MCF 10A (cell line): ENCODE measurements at regions of chr9 and their contacts with region 1.

Region 1: DNA sequence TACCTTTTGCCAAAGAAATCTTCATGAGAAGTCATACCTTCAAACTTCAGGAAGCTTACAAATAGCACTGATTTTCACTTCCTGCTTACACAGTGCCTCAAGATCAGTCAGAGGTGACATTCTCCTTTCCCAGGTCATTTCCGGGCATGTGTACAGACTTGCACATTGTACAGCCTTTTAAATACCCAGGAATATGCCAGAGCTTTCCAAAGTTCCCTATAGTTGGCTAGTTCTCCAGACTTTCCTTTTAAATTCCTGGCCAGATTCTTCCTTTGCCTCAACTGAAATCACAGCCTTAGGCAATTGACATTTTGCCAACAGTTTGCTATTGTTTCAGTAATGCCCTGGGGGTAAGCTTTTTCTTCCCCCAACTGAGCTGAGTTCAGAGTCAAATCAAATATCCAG is 47.2 kb downstream of the RFX3 start:
- DNase-seq: peak; percentile 84
- H3K4me3 Mint-ChIP-seq: peak overlapping the region; percentile 44
- H3K27ac Mint-ChIP-seq: peak overlapping the region; percentile 91
- H3K4me1 Mint-ChIP-seq: peaks cover 30% of the 10 kb centered on the region
- H3K27me3 Mint-ChIP-seq: no peaks in the 10 kb centered on the region
- CTCF ChIP-seq: no peak

Region 2: DNA sequence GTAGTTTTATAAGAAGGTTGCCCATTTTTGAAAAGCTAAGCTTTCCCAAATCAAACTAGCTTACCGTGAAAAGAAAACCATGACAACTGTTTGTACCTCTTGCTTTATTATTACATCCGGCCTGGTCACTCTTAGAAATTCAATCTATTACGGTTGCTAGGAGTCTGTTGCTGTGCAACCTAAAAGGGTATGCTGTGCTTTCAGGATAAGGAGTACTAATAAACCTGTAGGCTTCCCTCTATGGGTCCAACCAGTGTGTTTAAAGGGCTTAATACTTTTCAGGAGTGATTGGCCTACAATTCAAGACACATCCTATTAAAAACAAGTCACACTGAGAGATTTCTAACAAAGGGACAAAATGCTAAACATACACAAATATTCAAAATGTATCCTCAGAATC is 20.1 kb after region 1 on chr9:
- CTCF ChIA-PET with region 1: interaction called, 12 read pairs
- POLR2A ChIA-PET with region 1: interaction called, 6 read pairs
- intact Hi-C with region 1: no loop called
- DNase-seq: no peak
- H3K4me3 Mint-ChIP-seq: no peak overlapping the region
- H3K27ac Mint-ChIP-seq: no peak overlapping the region
- H3K4me1 Mint-ChIP-seq: peaks cover 14% of the 10 kb centered on the region
- H3K27me3 Mint-ChIP-seq: no peaks in the 10 kb centered on the region
- CTCF ChIP-seq: no peak

Region 3: GRCh38 chr9:3508521-3509291 is 30.2 kb after region 1 on chr9:
- CTCF ChIA-PET with region 1: interaction called, 6 read pairs
- POLR2A ChIA-PET with region 1: interaction called, 50 read pairs
- intact Hi-C with region 1: no loop called
- DNase-seq: peak; percentile 70
- H3K4me3 Mint-ChIP-seq: peak overlapping the region; percentile 71
- H3K27ac Mint-ChIP-seq: peak overlapping the region; percentile 89
- H3K4me1 Mint-ChIP-seq: peaks cover 17% of the 10 kb centered on the region
- H3K27me3 Mint-ChIP-seq: no peaks in the 10 kb centered on the region
- CTCF ChIP-seq: no peak